Caco-2 (cell line): ENCODE measurements at regions of chr9 and their contacts with region 1.

Region 1: DNA sequence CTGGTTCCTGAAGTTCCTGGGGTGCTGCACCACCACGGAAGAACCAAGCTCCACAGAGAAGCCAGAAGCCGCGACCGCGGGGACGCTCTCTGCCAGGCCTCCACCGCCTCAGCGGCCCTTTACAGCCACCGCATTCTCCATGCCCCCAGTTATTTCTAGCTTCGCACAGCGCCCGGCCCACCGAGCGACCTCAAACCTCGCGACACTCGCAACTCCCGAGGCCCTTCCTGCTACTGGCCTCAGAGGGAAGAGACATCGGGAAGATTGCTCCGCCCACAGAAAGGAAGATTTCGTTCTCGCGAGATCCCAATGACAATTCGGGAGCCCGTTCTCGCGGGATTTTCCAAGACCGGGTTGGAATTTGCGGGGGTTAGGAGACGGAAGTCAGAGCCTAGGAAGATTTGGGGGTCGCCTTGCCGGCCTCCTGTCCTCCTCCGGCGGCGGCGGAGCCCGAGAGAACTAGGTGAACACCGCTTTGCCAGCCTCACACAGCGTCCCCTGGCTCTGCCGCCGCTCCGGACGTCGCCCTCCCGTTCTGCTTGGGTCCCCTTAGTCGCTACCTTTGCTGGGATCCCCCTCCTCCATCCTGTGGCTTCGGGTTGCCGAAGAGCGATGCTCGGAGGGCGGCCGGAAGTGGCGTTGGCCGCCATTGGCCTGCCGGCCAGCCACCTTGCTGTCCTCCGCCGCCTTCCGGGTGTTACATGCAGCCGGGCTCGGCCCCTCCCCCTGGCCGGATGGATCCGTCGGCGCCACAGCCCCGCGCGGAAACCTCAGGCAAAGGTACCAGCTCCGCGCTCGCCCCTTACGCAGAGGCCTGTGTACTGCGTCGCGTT is at the start of gene ERCC6L2:
- DNase-seq: peak; percentile 96 to 98
- H3K4me3 ChIP-seq: no peak within 1 kb of the TSS
- H3K4me3 Mint-ChIP-seq: no peak within 1 kb of the TSS
- H3K27ac Mint-ChIP-seq: no peak within 1 kb of the TSS
- H3K4me1 ChIP-seq: no peaks in the 10 kb centered on the region
- H3K4me1 Mint-ChIP-seq: no peaks in the 10 kb centered on the region
- H3K27me3 ChIP-seq: no peaks in the 10 kb centered on the region
- H3K27me3 Mint-ChIP-seq: no peaks in the 10 kb centered on the region
- CTCF ChIP-seq: no peak
- total RNA-seq, gene ERCC6L2: 45.4 and 46.1 TPM in 2 replicates

Region 2: GRCh38 chr9:95510709-95511615 is 364.6 kb before region 1 on chr9:
- CTCF ChIA-PET with region 1: no interaction called
- POLR2A ChIA-PET with region 1: interaction called, 3 read pairs
- intact Hi-C with region 1: loop called (anchors 2 kb)
- DNase-seq: peak; percentile 96 to 97
- H3K4me3 ChIP-seq: peak overlapping the region; percentile 94
- H3K4me3 Mint-ChIP-seq: peak overlapping the region; percentile 93
- H3K27ac Mint-ChIP-seq: peak overlapping the region; percentile 87
- H3K4me1 ChIP-seq: peaks cover 11% of the 10 kb centered on the region; the same call in 1 of the 2 replicates
- H3K4me1 Mint-ChIP-seq: no peaks in the 10 kb centered on the region
- H3K27me3 ChIP-seq: no peaks in the 10 kb centered on the region
- H3K27me3 Mint-ChIP-seq: no peaks in the 10 kb centered on the region
- CTCF ChIP-seq: no peak

Region 3: GRCh38 chr9:95736370-95736769 is 139.2 kb before region 1 on chr9:
- CTCF ChIA-PET with region 1: interaction called, 3 read pairs
- POLR2A ChIA-PET with region 1: no interaction called
- intact Hi-C with region 1: loop called (anchors 10 kb)
- DNase-seq: peak in 1 of 2 experiments; percentile 15
- H3K4me3 ChIP-seq: no peak overlapping the region
- H3K4me3 Mint-ChIP-seq: no peak overlapping the region
- H3K27ac Mint-ChIP-seq: no peak overlapping the region
- H3K4me1 ChIP-seq: peaks cover 11% of the 10 kb centered on the region; the same call in 1 of the 2 replicates
- H3K4me1 Mint-ChIP-seq: peaks cover 6% of the 10 kb centered on the region
- H3K27me3 ChIP-seq: no peaks in the 10 kb centered on the region
- H3K27me3 Mint-ChIP-seq: no peaks in the 10 kb centered on the region
- CTCF ChIP-seq: peak; percentile 51 to 54

Region 4: DNA sequence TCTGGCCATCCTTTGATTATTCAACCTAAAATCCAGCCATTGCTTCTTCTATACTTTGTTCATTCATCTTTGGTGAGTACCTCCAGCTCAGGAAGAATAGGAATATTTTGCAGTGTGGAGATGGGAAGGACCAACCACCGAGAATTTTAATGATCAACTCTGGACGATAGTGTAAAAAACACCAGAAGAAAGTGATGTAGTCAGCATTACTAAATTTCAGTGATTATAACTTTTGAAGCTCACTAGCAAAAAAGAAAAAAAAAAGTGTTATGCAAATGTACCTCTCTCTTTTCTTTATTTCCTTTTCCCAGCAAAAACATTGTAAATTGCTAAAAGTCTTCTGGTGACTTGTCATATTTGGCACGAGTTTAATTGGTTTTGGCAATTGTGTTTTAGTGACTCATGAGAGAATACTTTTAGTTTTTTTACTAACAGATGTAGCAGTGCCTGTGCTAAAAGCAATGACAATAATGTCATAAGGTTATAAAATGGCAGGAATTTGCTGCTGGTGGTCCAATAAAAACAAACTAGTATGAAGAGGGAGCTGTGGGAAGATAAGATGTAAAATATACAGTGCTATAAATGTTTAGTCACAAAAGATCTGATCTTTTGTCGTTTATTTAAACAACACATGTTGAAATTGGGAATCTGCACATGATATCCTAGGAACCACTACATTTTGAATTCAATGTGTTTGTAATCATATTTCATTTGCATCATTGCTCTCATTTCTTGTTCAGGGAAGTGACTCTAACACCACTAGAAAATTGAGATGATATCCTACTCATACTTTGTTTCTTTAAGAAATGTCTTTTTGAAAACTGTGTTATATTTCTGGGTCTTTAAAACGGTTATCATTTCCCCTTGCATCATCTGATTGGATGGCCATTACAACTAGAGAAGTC is 81.3 kb before region 1 on chr9:
- CTCF ChIA-PET with region 1: no interaction called
- POLR2A ChIA-PET with region 1: no interaction called
- intact Hi-C with region 1: no loop called
- DNase-seq: no peak
- H3K4me3 ChIP-seq: no peak overlapping the region
- H3K4me3 Mint-ChIP-seq: no peak overlapping the region
- H3K27ac Mint-ChIP-seq: no peak overlapping the region
- H3K4me1 ChIP-seq: no peaks in the 10 kb centered on the region
- H3K4me1 Mint-ChIP-seq: no peaks in the 10 kb centered on the region
- H3K27me3 ChIP-seq: no peaks in the 10 kb centered on the region
- H3K27me3 Mint-ChIP-seq: peaks cover 2% of the 10 kb centered on the region
- CTCF ChIP-seq: no peak